ENCODE measurements at regions of chr10 and their contacts with region 1.

Region 1: DNA sequence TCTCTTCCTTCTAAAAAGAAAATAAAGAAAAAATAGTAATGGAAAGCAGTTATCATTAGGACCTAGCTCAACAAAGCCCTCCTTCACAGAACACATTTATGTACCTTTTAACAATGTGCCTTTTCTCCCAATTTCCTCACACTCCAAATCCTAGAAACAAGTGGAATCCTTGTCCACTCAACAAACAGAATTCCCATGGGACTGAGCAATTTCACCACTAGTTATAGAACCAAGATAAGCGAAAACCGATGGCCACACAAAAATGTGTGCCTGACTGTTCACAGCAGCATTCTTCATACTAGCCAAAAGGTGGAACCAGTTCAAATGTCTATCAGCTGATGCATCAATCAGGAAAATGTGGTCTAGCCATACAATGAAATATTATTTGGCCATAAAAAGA is 17.3 kb downstream of the DCLRE1C start:
- DNase-seq: no peak
- ATAC-seq: no peak
- H3K4me3 ChIP-seq: no peak overlapping the region
- H3K27ac ChIP-seq: no peak overlapping the region
- H3K4me1 ChIP-seq: no peaks in the 10 kb centered on the region
- H3K27me3 ChIP-seq: no peaks in the 10 kb centered on the region
- CTCF ChIP-seq: no peak

Region 2: GRCh38 chr10:14926061-14926470 is 10.5 kb before region 1 on chr10:
- CTCF ChIA-PET with region 1: no interaction called
- POLR2A ChIA-PET with region 1: interaction called, 10 read pairs
- in situ Hi-C with region 1: no loop called
- intact Hi-C with region 1: no loop called
- DNase-seq: no peak
- ATAC-seq: no peak
- H3K4me3 ChIP-seq: no peak overlapping the region
- H3K27ac ChIP-seq: no peak overlapping the region
- H3K4me1 ChIP-seq: no peaks in the 10 kb centered on the region
- H3K27me3 ChIP-seq: no peaks in the 10 kb centered on the region
- CTCF ChIP-seq: no peak

Measured in Panc1 (cell line).